ENCODE measurements at regions of chr9 and their contacts with region 1.

Region 1: GRCh38 chr9:34328987-34329832 is at the starts of genes KIF24 and NUDT2:
- DNase-seq: peak; percentile 93 to 99
- ATAC-seq: peak; percentile 96 to 98 (median 98)
- H3K4me3 ChIP-seq: peak within 1 kb of the TSS; percentile 62 to 93 (median 81)
- H3K27ac ChIP-seq: peak within 1 kb of the TSS; percentile 59 to 97 (median 92)
- H3K4me1 ChIP-seq: peaks cover 0 to 39% (median 28%) of the 10 kb centered on the region in 9 donors
- H3K27me3 ChIP-seq: no peaks in the 10 kb centered on the region
- CTCF ChIP-seq: peak in 2 of 9 donors; percentile 18 to 24
- total RNA-seq, gene KIF24: 0.25 to 1.2 (median 0.50) TPM
- total RNA-seq, gene NUDT2: 14.4 to 24.8 (median 18.4) TPM

Region 2: GRCh38 chr9:34376596-34377403 is 47.6 kb after region 1 on chr9 and contains the start of gene MYORG:
- intact Hi-C with region 1: loop called (anchors 1 to 5 kb)
- DNase-seq: peak; percentile 92 to 94
- ATAC-seq: peak; percentile 77 to 89 (median 84)
- H3K4me3 ChIP-seq: peak within 1 kb of the TSS; percentile 55 to 92 (median 80)
- H3K27ac ChIP-seq: peak within 1 kb of the TSS; percentile 35 to 88 (median 75)
- H3K4me1 ChIP-seq: peaks cover 6 to 53% (median 39%) of the 10 kb centered on the region in 9 donors
- H3K27me3 ChIP-seq: peaks cover 0 to 7% (median 0%) of the 10 kb centered on the region in 7 donors
- CTCF ChIP-seq: no peak
- total RNA-seq, gene MYORG: 4.9 to 9.1 (median 7.1) TPM

Region 3: DNA sequence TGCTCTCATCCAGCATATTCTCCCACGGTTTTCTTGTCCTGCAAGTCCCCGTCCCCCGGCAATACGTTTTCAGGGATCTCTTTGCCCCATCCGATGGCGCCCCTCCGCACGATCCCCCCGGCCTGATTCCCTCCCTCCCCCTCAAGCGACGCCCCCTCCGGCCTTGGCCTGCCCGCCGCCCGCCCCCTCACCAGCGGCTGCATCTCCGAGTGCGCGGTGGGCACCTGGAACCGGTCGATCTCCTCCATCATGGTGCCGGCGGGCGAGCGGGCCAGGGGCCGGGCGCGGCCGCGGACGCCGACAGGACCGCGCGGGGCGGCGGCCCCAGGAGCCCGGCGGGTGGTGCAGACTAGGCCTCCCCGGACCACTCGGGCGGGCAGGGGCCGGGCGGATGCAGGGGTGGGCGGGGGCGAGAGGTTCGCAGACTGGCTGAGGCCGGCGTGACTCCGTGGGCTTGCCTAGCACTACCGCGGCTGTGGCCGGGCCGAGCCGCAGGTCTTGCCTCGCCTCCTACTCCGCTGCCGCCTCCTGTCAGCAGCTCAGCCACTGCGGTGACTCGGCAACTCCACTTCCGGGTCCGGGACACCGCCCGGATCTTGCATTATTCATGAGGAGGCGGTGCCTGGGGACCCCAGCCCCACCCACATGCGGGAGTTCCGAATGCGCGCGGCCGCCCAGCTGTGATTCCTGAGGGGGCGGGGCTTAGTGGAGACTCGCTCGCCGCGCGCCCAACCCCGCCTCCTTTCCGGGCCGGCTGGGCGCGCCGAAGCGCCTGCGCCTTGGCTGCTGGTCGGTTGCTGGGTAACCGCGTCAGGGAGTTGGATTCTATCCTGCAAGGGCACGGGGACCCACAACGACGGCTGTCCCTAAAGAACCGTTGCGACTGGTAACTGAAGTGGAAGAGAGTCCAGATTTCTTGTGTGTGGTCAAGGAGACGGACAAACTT is 129.1 kb after region 1 on chr9 and contains the starts of genes DNAI1 and FAM219A:
- intact Hi-C with region 1: loop called in 1 of 10 experiments (anchors 1 kb)
- DNase-seq: peak; percentile 99
- ATAC-seq: peak; percentile 95 to 98 (median 98)
- H3K4me3 ChIP-seq: peak within 1 kb of the TSS; percentile 72 to 94 (median 85)
- H3K27ac ChIP-seq: peak within 1 kb of the TSS; percentile 63 to 93 (median 89)
- H3K4me1 ChIP-seq: peaks cover 12 to 52% (median 39%) of the 10 kb centered on the region in 9 donors
- H3K27me3 ChIP-seq: peaks cover 0 to 8% (median 0%) of the 10 kb centered on the region in 7 donors
- CTCF ChIP-seq: no peak
- total RNA-seq, gene DNAI1: 0.09 to 0.18 TPM in 2 of 10 donors, not detected in the others
- total RNA-seq, gene FAM219A: 18.9 to 38.6 (median 27.9) TPM

Region 4: GRCh38 chr9:34591248-34591916 is 262.2 kb after region 1 on chr9:
- intact Hi-C with region 1: loop called in 1 of 10 experiments (anchors 10 kb)
- DNase-seq: peak; percentile 85 to 90
- ATAC-seq: peak; percentile 81 to 96 (median 89)
- H3K4me3 ChIP-seq: peak overlapping the region in 9 of 10 donors; percentile 32 to 57 (median 51)
- H3K27ac ChIP-seq: peak overlapping the region in 6 of 10 donors; percentile 12 to 54 (median 32)
- H3K4me1 ChIP-seq: peaks cover 16 to 53% (median 38%) of the 10 kb centered on the region in 9 donors
- H3K27me3 ChIP-seq: peaks cover 0 to 86% (median 56%) of the 10 kb centered on the region in 7 donors
- CTCF ChIP-seq: peak; percentile 82 to 95 (median 92)

Region 5: GRCh38 chr9:34603610-34604231 is 274.5 kb after region 1 on chr9:
- intact Hi-C with region 1: loop called in 6 of 10 experiments (anchors 5 to 10 kb)
- DNase-seq: peak; percentile 78 to 85
- ATAC-seq: peak; percentile 76 to 91 (median 87)
- H3K4me3 ChIP-seq: no peak overlapping the region
- H3K27ac ChIP-seq: no peak overlapping the region
- H3K4me1 ChIP-seq: no peaks in the 10 kb centered on the region
- H3K27me3 ChIP-seq: no peaks in the 10 kb centered on the region
- CTCF ChIP-seq: peak; percentile 82 to 94 (median 93)

Region 6: GRCh38 chr9:34611829-34612630 is 282.8 kb after region 1 on chr9 and contains the start of gene RPP25L:
- intact Hi-C with region 1: loop called in 2 of 10 experiments (anchors 5 to 10 kb)
- DNase-seq: peak; percentile 88 to 93
- ATAC-seq: peak; percentile 95 to 99 (median 97)
- H3K4me3 ChIP-seq: peak within 1 kb of the TSS; percentile 34 to 86 (median 79)
- H3K27ac ChIP-seq: peak within 1 kb of the TSS; percentile 71 to 98 (median 92)
- H3K4me1 ChIP-seq: peaks cover 2 to 31% (median 25%) of the 10 kb centered on the region in 9 donors
- H3K27me3 ChIP-seq: no peaks in the 10 kb centered on the region
- CTCF ChIP-seq: no peak
- total RNA-seq, gene RPP25L: 29.2 to 48.5 (median 39.2) TPM

Measured in heart right ventricle (tissue), 16 donors.